ENCODE measurements at regions of chr3 and their contacts with region 1.

Region 1: DNA sequence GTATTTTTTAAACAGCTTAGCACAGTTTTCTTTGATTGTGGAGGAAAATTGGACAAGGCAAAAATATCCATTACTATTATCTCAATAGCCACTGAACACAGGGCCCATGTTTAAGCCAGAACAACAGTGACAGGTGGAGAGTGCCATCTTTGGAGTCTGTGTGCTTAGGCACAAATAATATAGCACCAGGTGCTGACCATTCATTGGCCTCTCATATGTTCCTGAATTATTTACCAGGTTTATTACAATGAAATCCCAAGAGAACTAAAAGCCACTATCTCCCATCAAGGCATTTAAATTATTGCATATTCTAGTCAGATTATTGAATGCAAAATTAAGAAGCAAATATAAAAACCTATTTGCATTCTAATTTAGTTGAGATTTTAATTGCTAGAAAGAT is 39.6 kb downstream of the GPR156 start:
- DNase-seq: no peak
- H3K4me3 ChIP-seq: no peak overlapping the region
- H3K27ac ChIP-seq: no peak overlapping the region
- H3K4me1 ChIP-seq: no peaks in the 10 kb centered on the region
- H3K27me3 ChIP-seq: no peaks in the 10 kb centered on the region
- CTCF ChIP-seq: no peak
- POLR2A ChIP-seq: no peak

Region 2: DNA sequence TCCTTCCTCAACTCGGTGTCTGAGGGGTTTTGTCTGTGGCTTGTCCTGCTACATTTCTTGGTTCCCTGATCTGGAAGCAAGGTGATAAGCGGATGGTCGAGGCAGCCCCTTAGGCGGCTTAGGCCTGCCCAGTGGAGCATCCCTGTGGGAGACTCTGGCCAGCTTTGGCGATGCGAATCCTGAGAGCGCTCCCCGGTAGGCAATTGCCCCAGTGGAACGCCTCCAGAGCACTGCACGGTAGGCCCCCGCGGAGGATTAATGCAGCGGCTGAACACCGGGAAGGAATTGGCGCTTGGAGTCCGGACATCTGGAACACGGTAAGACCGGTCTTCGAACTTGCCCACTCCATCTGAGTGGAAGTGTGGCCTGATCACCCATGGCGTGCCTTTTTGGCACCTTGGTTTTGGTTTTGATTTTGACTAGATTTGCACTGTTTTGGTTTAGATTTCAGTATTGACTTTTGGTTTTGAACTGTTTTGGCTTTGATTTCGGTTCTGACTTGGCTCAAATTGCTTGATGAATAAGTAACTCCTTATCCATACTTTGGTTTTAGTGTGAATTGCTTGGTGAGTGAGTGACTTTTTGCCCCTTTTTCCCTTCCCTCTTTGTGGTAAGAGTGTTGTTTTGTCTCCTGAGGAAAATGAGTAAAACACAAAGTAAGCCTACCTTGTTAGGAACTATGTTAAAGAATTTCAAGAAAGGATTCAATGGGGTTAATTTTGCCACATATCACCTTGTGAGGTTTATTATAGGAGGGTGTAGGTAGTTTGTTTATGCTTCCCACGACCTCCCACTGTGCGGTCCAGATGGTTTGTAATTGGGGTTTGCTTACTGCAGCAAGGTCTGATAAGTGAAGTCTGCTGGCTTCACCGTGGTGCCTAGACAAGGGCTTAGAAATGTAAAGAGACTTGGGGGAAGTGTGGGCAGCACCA is 66.7 kb after region 1 on chr3:
- intact Hi-C with region 1: no loop called
- DNase-seq: no peak
- H3K4me3 ChIP-seq: no peak overlapping the region
- H3K27ac ChIP-seq: no peak overlapping the region
- H3K4me1 ChIP-seq: no peaks in the 10 kb centered on the region
- H3K27me3 ChIP-seq: no peaks in the 10 kb centered on the region
- CTCF ChIP-seq: no peak
- POLR2A ChIP-seq: no peak

Region 3: GRCh38 chr3:120558771-120559241 is 313.4 kb after region 1 on chr3:
- intact Hi-C with region 1: loop called (anchors 5 kb)
- DNase-seq: no peak
- H3K4me3 ChIP-seq: peak overlapping the region; percentile 39 to 45
- H3K27ac ChIP-seq: peak overlapping the region; percentile 82
- H3K4me1 ChIP-seq: peaks cover 19% of the 10 kb centered on the region
- H3K27me3 ChIP-seq: no peaks in the 10 kb centered on the region
- CTCF ChIP-seq: peak; percentile 97 to 99 (median 98)
- POLR2A ChIP-seq: no peak